WTC11 (cell line): ENCODE measurements at regions of chr11 and their contacts with region 1.

Region 1: DNA sequence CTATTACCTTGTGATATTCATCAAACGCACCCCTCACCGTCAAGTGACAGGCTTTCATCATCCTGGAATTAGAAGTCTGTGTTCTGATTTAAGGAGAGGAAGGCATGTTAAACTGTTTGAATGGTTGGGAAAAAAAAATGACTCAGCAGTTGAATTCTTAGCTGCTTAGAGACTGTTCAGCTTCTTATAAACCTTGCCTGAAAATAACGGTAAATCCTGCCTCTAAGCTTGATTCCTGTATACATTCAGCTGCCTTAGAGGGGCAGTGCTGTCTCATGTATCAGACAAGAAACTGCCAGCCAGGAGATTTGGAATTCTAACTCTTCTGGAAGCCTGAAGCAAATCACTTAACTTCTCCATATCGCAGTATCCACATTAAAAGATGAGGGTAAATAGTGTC is 437.4 kb downstream of the JRKL start:
- DNase-seq: no peak
- ATAC-seq: peak; percentile 66
- H3K4me3 Mint-ChIP-seq: no peak overlapping the region
- H3K27ac Mint-ChIP-seq: no peak overlapping the region
- H3K4me1 Mint-ChIP-seq: no peaks in the 10 kb centered on the region
- H3K27me3 Mint-ChIP-seq: no peaks in the 10 kb centered on the region; the same call in 1 of the 2 replicates
- CTCF ChIP-seq: no peak

Region 2: DNA sequence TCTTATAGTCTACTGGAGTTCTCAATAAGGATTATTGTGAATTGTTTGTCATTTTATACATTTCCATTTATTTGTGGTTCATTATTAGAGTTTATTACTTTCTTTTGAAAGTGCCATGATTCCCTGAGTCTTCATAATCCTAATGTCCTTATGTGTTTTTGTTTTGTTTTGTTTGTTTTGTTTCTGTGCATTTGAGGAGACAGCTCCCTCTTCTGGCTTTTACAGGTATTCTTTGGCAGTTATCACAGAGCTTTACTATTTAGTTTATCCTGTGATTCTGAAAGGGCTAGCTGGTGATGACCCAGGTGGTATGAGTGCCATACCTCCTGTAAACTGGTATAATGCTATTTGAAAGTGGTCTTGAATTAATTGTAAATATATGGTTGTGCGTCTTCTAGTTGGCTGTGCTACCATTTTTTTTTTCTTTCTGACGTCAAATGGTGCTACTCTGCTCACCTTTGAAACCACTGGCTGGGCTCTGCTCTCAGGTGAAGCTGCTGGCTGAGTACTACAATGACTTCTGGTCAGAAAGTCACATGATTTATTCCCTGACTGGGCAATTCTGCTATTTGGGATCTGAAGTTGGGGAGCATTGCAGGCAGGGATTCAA is 313.8 kb after region 1 on chr11:
- CTCF ChIA-PET with region 1: interaction called, 18 read pairs
- POLR2A ChIA-PET with region 1: no interaction called
- DNase-seq: no peak
- ATAC-seq: peak; percentile 77
- H3K4me3 Mint-ChIP-seq: no peak overlapping the region
- H3K27ac Mint-ChIP-seq: no peak overlapping the region
- H3K4me1 Mint-ChIP-seq: no peaks in the 10 kb centered on the region
- H3K27me3 Mint-ChIP-seq: no peaks in the 10 kb centered on the region
- CTCF ChIP-seq: peak; percentile 61